ENCODE measurements at regions of chr10 and their contacts with region 1.

Region 1: GRCh38 chr10:71766702-71767419 is 6.5 kb downstream of the VSIR start:
- DNase-seq: peak; percentile 54
- H3K4me3 ChIP-seq: no peak overlapping the region
- H3K27ac ChIP-seq: peak overlapping the region; percentile 79
- H3K4me1 ChIP-seq: peaks cover 34% of the 10 kb centered on the region
- H3K27me3 ChIP-seq: no peaks in the 10 kb centered on the region
- CTCF ChIP-seq: no peak
- POLR2A ChIP-seq: no peak

Region 2: GRCh38 chr10:71748671-71749191 is 18.1 kb before region 1 on chr10:
- CTCF ChIA-PET with region 1: interaction called, 7 read pairs
- POLR2A ChIA-PET with region 1: no interaction called
- dilution Hi-C with region 1: no loop called
- intact Hi-C with region 1: loop called (anchors 2 kb)
- DNase-seq: peak; percentile 50
- H3K4me3 ChIP-seq: no peak overlapping the region
- H3K27ac ChIP-seq: no peak overlapping the region
- H3K4me1 ChIP-seq: peaks cover 15% of the 10 kb centered on the region
- H3K27me3 ChIP-seq: no peaks in the 10 kb centered on the region
- CTCF ChIP-seq: peak in 1 of 2 donors; percentile 22
- POLR2A ChIP-seq: no peak

Region 3: GRCh38 chr10:72126184-72126871 is 359.5 kb after region 1 on chr10:
- CTCF ChIA-PET with region 1: no interaction called
- POLR2A ChIA-PET with region 1: no interaction called
- dilution Hi-C with region 1: no loop called
- intact Hi-C with region 1: no loop called
- DNase-seq: peak; percentile 65
- H3K4me3 ChIP-seq: no peak overlapping the region
- H3K27ac ChIP-seq: no peak overlapping the region
- H3K4me1 ChIP-seq: no peaks in the 10 kb centered on the region
- H3K27me3 ChIP-seq: no peaks in the 10 kb centered on the region
- CTCF ChIP-seq: peak; percentile 39
- POLR2A ChIP-seq: no peak